ENCODE measurements at regions of chr9 and their contacts with region 1.

Region 1: GRCh38 chr9:123867034-123867433 is 62.9 kb downstream of the DENND1A start:
- DNase-seq: peak in 6 of 9 donors; percentile 9 to 48 (median 26)
- ATAC-seq: peak; percentile 77
- H3K4me3 ChIP-seq: no peak overlapping the region
- H3K4me3 Mint-ChIP-seq: peak overlapping the region in 9 of 10 donors; percentile 31 to 78 (median 61)
- H3K27ac ChIP-seq: no peak overlapping the region
- H3K27ac Mint-ChIP-seq: peak overlapping the region in 8 of 9 donors; percentile 52 to 93 (median 65)
- H3K4me1 ChIP-seq: peaks cover 0 to 16% of the 10 kb centered on the region in 2 donors
- H3K4me1 Mint-ChIP-seq: peaks cover 13 to 44% (median 35%) of the 10 kb centered on the region in 7 donors
- H3K27me3 ChIP-seq: no peaks in the 10 kb centered on the region
- H3K27me3 Mint-ChIP-seq: no peaks in the 10 kb centered on the region

Region 2: DNA sequence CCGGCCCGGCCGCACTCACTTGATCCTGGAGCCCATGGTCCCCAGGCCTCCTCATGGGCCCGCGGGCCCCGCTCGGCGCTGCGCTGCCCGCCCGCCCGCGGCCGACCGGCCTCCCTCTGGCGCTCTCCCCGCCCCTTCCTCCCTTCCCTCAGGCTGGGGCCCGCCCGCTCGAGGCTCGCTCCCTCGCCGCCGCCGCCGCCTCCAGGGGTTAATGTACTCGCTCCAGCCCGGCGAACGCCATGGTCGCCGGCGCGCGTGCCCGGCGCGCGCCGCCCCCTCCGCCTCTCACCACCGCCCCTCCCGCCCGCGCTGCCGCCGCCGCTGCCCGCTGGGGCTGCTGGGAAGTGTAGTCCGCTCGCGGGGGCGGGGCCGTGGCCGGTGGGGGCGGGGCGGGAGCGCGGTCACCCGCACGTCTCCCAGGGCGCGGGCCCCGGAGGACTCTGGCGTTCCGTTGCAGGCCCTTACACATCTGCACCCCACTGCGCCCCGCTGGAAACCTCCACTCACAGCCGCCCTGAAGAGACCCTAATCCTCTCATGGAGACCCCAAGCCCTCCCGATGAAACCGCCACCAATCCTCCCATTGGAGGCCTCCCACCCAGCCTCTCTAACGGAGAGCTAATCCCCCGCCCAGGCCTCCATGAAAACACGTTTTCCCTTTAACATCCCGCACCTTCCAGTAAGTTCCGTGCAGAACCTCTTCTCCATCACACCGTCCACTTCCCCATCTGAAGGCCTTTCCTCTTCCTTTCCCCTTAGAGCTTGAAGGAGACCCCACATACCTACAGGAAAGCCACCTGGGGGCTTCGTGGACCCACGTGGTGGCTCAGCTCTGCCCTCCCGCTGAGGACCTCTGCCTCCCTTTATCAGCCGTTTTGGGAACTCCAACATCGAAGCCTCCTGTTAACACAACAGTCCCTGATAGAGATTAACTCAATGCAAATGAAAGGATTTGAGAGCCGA is 63.1 kb after region 1 on chr9 and contains the start of gene DENND1A:
- CTCF ChIA-PET with region 1: no interaction called
- POLR2A ChIA-PET with region 1: no interaction called
- intact Hi-C with region 1: loop called in 1 of 2 experiments (anchors 5 kb)
- DNase-seq: peak; percentile 69 to 89 (median 79)
- ATAC-seq: peak; percentile 96
- H3K4me3 ChIP-seq: peak within 1 kb of the TSS; percentile 58
- H3K4me3 Mint-ChIP-seq: peak within 1 kb of the TSS; percentile 84 to 96 (median 88)
- H3K27ac ChIP-seq: peak within 1 kb of the TSS; percentile 73
- H3K27ac Mint-ChIP-seq: peak within 1 kb of the TSS; percentile 76 to 95 (median 88)
- H3K4me1 ChIP-seq: peaks cover 7 to 20% of the 10 kb centered on the region in 2 donors
- H3K4me1 Mint-ChIP-seq: peaks cover 32 to 48% (median 45%) of the 10 kb centered on the region in 7 donors
- H3K27me3 ChIP-seq: no peaks in the 10 kb centered on the region
- H3K27me3 Mint-ChIP-seq: peaks cover 0 to 14% (median 0%) of the 10 kb centered on the region in 5 donors
- total RNA-seq, gene DENND1A: 14.5 to 41.1 (median 17.1) TPM